Natural killer cell (primary cell): ENCODE measurements at regions of chr6 and their contacts with region 1.

Region 1: GRCh38 chr6:43427406-43428111 is at the start of gene ABCC10:
- DNase-seq: peak; percentile 88 to 98
- ATAC-seq: peak; percentile 94 to 98 (median 94)
- H3K4me3 ChIP-seq: peak within 1 kb of the TSS; percentile 77
- H3K4me3 Mint-ChIP-seq: peak within 1 kb of the TSS; percentile 97
- H3K27ac ChIP-seq: peak within 1 kb of the TSS; percentile 70
- H3K27ac Mint-ChIP-seq: peak within 1 kb of the TSS; percentile 91 to 92
- H3K4me1 ChIP-seq: peaks cover 27% of the 10 kb centered on the region
- H3K4me1 Mint-ChIP-seq: peaks cover 19 to 29% of the 10 kb centered on the region in 2 donors
- H3K27me3 ChIP-seq: no peaks in the 10 kb centered on the region
- H3K27me3 Mint-ChIP-seq: no peaks in the 10 kb centered on the region
- CTCF ChIP-seq: peak; percentile 12
- total RNA-seq, gene ABCC10: 74.6 to 90.5 (median 81.9) TPM

Region 2: DNA sequence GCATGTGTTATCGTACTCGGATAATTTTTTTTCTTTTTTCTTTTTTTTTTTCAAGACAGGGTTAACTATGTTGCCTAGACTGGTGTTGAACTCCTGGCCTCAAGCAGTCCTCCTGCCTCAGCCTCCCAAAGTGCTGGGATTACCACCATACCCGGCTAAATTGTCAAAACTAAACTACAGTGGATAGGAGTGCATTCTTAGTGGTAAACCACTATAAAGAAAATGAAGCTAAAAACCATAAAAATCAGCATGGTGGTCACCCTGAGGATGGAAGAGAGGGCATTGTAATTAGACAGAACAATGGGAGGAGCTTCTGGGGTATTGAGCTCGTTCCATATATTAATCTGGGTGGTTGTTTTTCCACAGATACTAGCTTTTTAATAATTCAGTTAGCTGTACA is 51.9 kb before region 1 on chr6:
- intact Hi-C with region 1: no loop called
- DNase-seq: no peak
- ATAC-seq: no peak
- H3K4me3 ChIP-seq: no peak overlapping the region
- H3K4me3 Mint-ChIP-seq: no peak overlapping the region
- H3K27ac ChIP-seq: no peak overlapping the region
- H3K27ac Mint-ChIP-seq: no peak overlapping the region
- H3K4me1 ChIP-seq: peaks cover 8% of the 10 kb centered on the region
- H3K4me1 Mint-ChIP-seq: peaks cover 28% of the 10 kb centered on the region in 2 donors
- H3K27me3 ChIP-seq: no peaks in the 10 kb centered on the region
- H3K27me3 Mint-ChIP-seq: no peaks in the 10 kb centered on the region
- CTCF ChIP-seq: no peak

Region 3: GRCh38 chr6:43391440-43392031 is 36.0 kb before region 1 on chr6:
- intact Hi-C with region 1: loop called (anchors 5 kb)
- DNase-seq: peak; percentile 57 to 78
- ATAC-seq: peak; percentile 71 to 88 (median 76)
- H3K4me3 ChIP-seq: no peak overlapping the region
- H3K4me3 Mint-ChIP-seq: peak overlapping the region; percentile 80
- H3K27ac ChIP-seq: no peak overlapping the region
- H3K27ac Mint-ChIP-seq: peak overlapping the region; percentile 58 to 59
- H3K4me1 ChIP-seq: peaks cover 35% of the 10 kb centered on the region
- H3K4me1 Mint-ChIP-seq: peaks cover 49 to 50% of the 10 kb centered on the region in 2 donors
- H3K27me3 ChIP-seq: peaks cover 34% of the 10 kb centered on the region
- H3K27me3 Mint-ChIP-seq: peaks cover 54 to 66% of the 10 kb centered on the region in 2 donors
- CTCF ChIP-seq: no peak

Region 4: GRCh38 chr6:43454696-43455530 is 27.4 kb after region 1 on chr6:
- intact Hi-C with region 1: loop called (anchors 2 kb)
- DNase-seq: peak; percentile 31 to 66
- ATAC-seq: peak; percentile 49 to 68 (median 65)
- H3K4me3 ChIP-seq: peak overlapping the region; percentile 46
- H3K4me3 Mint-ChIP-seq: peak overlapping the region; percentile 91
- H3K27ac ChIP-seq: no peak overlapping the region
- H3K27ac Mint-ChIP-seq: peak overlapping the region; percentile 54 to 78
- H3K4me1 ChIP-seq: peaks cover 16% of the 10 kb centered on the region
- H3K4me1 Mint-ChIP-seq: peaks cover 16 to 25% of the 10 kb centered on the region in 2 donors
- H3K27me3 ChIP-seq: peaks cover 2% of the 10 kb centered on the region
- H3K27me3 Mint-ChIP-seq: peaks cover 7 to 8% of the 10 kb centered on the region in 2 donors
- CTCF ChIP-seq: peak; percentile 89

Region 5: DNA sequence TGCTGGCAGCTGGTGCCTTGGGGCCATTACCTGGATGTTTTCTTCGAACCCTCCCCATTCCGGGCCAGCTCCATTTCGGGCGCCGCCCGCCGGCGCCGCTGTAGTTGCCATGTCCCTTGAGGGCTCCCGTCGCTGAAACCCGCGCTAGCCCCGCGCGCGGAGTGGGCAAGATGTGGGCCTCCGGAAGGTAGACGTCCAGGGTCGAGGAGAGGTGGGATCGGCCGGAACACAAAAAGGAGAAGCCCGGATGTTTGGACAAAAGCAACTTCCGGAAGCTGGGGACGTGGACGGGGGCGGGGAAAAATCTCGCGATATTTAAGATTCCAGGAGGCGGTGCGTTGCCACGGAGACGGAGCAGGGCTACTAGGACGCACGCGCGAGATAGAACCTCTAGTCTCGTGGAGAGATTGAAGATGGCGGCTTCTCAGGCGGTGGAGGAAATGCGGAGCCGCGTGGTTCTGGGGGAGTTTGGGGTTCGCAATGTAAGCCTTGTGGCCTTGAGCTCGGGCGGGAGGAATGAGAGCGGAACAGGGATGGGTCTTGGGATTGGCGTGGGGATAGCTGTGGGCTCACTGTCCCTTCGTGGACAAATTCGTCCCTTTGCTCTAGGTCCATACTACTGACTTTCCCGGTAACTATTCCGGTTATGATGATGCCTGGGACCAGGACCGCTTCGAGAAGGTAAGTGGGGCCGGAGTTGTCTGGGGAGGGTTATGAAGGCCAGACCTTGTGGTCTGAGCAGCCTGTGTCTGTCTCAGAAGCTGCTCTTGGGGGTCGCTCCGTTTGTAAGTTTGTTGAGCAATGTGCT is 89.3 kb after region 1 on chr6 and contains the starts of genes POLR1C and YIPF3:
- intact Hi-C with region 1: loop called (anchors 1 kb)
- DNase-seq: peak; percentile 95 to 99
- ATAC-seq: peak; percentile 94 to 95 (median 95)
- H3K4me3 ChIP-seq: peak within 1 kb of the TSS; percentile 86
- H3K4me3 Mint-ChIP-seq: no peak within 1 kb of the TSS
- H3K27ac ChIP-seq: peak within 1 kb of the TSS; percentile 62
- H3K27ac Mint-ChIP-seq: no peak within 1 kb of the TSS
- H3K4me1 ChIP-seq: peaks cover 26% of the 10 kb centered on the region
- H3K4me1 Mint-ChIP-seq: peaks cover 1 to 14% of the 10 kb centered on the region in 2 donors
- H3K27me3 ChIP-seq: no peaks in the 10 kb centered on the region
- H3K27me3 Mint-ChIP-seq: no peaks in the 10 kb centered on the region
- CTCF ChIP-seq: no peak
- total RNA-seq, gene POLR1C: 22.3 to 29.3 (median 25.8) TPM
- total RNA-seq, gene YIPF3: 59.3 to 78.4 (median 70.0) TPM